PC-3 (cell line): ENCODE measurements at regions of chr20 and their contacts with region 1.

Region 1: DNA sequence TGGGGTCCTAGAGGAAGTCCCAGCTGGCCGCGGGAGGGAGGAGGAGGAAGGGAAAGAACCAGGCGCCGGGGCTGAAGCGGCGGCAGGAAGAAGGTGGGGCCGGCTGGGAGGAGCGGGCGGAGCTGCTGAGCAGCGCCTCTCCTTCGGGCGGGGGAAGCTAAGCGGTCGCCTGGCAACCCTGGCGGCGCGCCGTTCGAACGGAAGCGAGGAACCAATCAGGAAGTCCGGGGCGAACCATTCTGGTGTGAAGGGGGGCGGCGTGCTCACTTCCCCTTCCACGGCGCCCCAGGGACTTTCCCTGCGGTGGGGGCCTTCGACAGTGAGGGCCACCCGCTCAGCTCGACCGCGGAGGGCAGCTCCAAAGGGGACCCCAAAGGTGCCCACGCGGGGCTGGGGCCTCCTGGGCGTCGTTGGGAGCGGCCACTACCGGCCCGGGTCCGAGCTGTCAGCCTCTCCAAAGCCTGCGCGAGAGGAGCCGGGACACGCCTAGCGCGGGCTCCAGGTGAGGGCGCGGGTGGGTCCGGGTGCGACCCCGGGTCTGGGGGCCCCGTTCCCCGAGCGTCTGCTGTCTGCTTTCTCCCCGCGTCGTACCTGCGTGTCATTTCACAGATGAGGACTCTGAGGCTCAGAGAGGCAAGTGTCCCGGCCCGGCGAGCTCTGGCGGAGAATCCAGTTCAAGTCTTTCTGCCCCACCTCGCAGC is at the start of gene FAM110A:
- DNase-seq: peak; percentile 95
- ATAC-seq: peak; percentile 92
- H3K4me3 ChIP-seq: peak within 1 kb of the TSS; percentile 87
- H3K27ac ChIP-seq: peak within 1 kb of the TSS; percentile 78
- H3K4me1 ChIP-seq: peaks cover 29% of the 10 kb centered on the region
- H3K27me3 ChIP-seq: no peaks in the 10 kb centered on the region
- CTCF ChIP-seq: no peak
- total RNA-seq, gene FAM110A: 23.0 and 28.4 TPM in 2 replicates

Region 2: GRCh38 chr20:663315-664090 is 170.1 kb before region 1 on chr20:
- CTCF ChIA-PET with region 1: no interaction called
- POLR2A ChIA-PET with region 1: no interaction called
- intact Hi-C with region 1: no loop called
- DNase-seq: no peak
- ATAC-seq: no peak
- H3K4me3 ChIP-seq: no peak overlapping the region
- H3K27ac ChIP-seq: no peak overlapping the region
- H3K4me1 ChIP-seq: no peaks in the 10 kb centered on the region
- H3K27me3 ChIP-seq: peaks cover 63% of the 10 kb centered on the region
- CTCF ChIP-seq: no peak

Region 3: GRCh38 chr20:750801-751200 is 82.8 kb before region 1 on chr20:
- CTCF ChIA-PET with region 1: no interaction called
- POLR2A ChIA-PET with region 1: no interaction called
- intact Hi-C with region 1: no loop called
- DNase-seq: no peak
- ATAC-seq: no peak
- H3K4me3 ChIP-seq: no peak overlapping the region
- H3K27ac ChIP-seq: no peak overlapping the region
- H3K4me1 ChIP-seq: peaks cover 5% of the 10 kb centered on the region; the same call in 1 of the 2 replicates
- H3K27me3 ChIP-seq: no peaks in the 10 kb centered on the region
- CTCF ChIP-seq: no peak

Region 4: GRCh38 chr20:844473-845225 is 11.0 kb after region 1 on chr20:
- CTCF ChIA-PET with region 1: no interaction called
- POLR2A ChIA-PET with region 1: no interaction called
- intact Hi-C with region 1: loop called (anchors 1 kb)
- DNase-seq: peak; percentile 87
- ATAC-seq: peak; percentile 97
- H3K4me3 ChIP-seq: peak overlapping the region; percentile 60
- H3K27ac ChIP-seq: no peak overlapping the region
- H3K4me1 ChIP-seq: peaks cover 32% of the 10 kb centered on the region
- H3K27me3 ChIP-seq: no peaks in the 10 kb centered on the region
- CTCF ChIP-seq: no peak

Region 5: GRCh38 chr20:856361-857040 is 22.9 kb after region 1 on chr20:
- CTCF ChIA-PET with region 1: interaction called, 3 read pairs
- POLR2A ChIA-PET with region 1: no interaction called
- intact Hi-C with region 1: loop called (anchors 1 kb)
- DNase-seq: peak; percentile 99
- ATAC-seq: peak; percentile 96
- H3K4me3 ChIP-seq: peak overlapping the region; percentile 51
- H3K27ac ChIP-seq: peak overlapping the region; percentile 68
- H3K4me1 ChIP-seq: peaks cover 38% of the 10 kb centered on the region
- H3K27me3 ChIP-seq: no peaks in the 10 kb centered on the region
- CTCF ChIP-seq: no peak

Region 6: GRCh38 chr20:1005452-1006027 is 171.9 kb after region 1 on chr20:
- CTCF ChIA-PET with region 1: no interaction called
- POLR2A ChIA-PET with region 1: no interaction called
- intact Hi-C with region 1: no loop called
- DNase-seq: peak; percentile 65
- ATAC-seq: peak; percentile 92
- H3K4me3 ChIP-seq: no peak overlapping the region
- H3K27ac ChIP-seq: no peak overlapping the region
- H3K4me1 ChIP-seq: no peaks in the 10 kb centered on the region
- H3K27me3 ChIP-seq: peaks cover 42% of the 10 kb centered on the region; the same call in 1 of the 2 replicates
- CTCF ChIP-seq: no peak

Region 7: GRCh38 chr20:1150218-1150617 is 316.6 kb after region 1 on chr20:
- CTCF ChIA-PET with region 1: no interaction called
- POLR2A ChIA-PET with region 1: interaction called, 12 read pairs
- intact Hi-C with region 1: no loop called
- DNase-seq: peak; percentile 55
- ATAC-seq: peak; percentile 92
- H3K4me3 ChIP-seq: no peak overlapping the region
- H3K27ac ChIP-seq: no peak overlapping the region
- H3K4me1 ChIP-seq: no peaks in the 10 kb centered on the region
- H3K27me3 ChIP-seq: no peaks in the 10 kb centered on the region
- CTCF ChIP-seq: no peak